H1 (cell line): ENCODE measurements at regions of chr6 and their contacts with region 1.

Region 1: DNA sequence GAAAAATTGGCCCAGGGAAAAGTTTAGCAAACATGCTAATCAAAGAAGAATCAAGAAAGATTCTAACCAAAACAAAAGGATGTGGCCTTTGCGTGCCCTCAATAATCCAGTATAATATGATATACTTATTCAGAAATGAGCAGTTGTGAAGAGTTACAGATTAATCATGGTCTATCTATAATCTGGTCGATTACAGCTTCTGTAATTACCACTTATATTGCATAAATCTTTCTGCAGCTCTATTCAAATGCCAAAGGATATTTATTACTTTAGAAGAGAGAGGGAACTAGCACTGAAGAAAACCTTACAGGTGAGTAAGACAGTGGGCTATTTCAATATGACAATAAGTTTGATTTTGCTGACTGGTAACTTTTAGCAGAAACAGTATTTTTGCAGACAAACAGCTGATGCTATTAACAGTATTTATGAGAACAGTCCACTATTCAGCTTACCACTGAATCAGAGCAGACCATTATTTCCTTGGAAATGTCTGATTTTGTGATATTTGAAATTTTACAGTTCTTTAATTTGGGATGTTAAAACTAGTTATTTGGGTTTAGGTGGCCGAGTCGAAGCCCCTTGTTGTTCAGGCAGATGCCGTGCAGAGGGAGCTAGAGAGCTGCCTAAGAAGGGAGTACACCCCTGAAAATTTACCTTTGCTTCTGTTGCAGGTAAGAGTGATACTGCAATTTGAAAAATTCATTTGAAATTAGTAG is 92.2 kb downstream of the CEP57L1 start:
- DNase-seq: peak; percentile 9 to 78
- H3K4me3 ChIP-seq: no peak overlapping the region
- H3K27ac ChIP-seq: no peak overlapping the region
- H3K4me1 ChIP-seq: peaks cover 0 to 7% (median 2%) of the 10 kb centered on the region in 4 experiments; a peak in 2 of 7 replicates
- H3K27me3 ChIP-seq: no peaks in the 10 kb centered on the region
- CTCF ChIP-seq: peak; percentile 68 to 88 (median 83)
- EP300 ChIP-seq: no peak
- POLR2A ChIP-seq: no peak
- RAD21 ChIP-seq: peak; percentile 95 to 96

Region 2: DNA sequence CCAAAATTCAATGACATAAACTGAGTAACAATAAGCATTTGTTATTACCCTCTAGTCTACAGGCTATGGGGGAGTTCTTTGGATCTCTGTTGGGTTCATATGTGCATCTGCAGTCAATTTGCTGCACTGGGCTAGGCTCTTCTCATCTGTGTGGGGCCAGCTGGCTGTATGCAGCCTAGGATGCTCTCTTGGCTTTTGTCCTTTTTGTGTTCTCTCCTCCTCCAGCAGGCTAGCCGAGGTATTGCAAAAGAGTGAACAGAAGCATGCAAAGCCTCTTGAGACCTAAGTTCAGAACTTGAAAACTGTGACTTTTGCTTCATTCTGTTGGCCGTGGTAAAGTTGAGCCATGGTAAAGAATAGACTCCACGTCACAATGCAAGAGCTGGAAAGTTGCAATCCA is 689.7 kb before region 1 on chr6:
- CTCF ChIA-PET with region 1: no interaction called
- POLR2A ChIA-PET with region 1: no interaction called
- DNase-seq: peak in 1 of 2 experiments; percentile 58
- H3K4me3 ChIP-seq: no peak overlapping the region
- H3K27ac ChIP-seq: no peak overlapping the region
- H3K4me1 ChIP-seq: no peaks in the 10 kb centered on the region
- H3K27me3 ChIP-seq: no peaks in the 10 kb centered on the region
- CTCF ChIP-seq: peak; percentile 8 to 66 (median 54)
- EP300 ChIP-seq: no peak
- POLR2A ChIP-seq: no peak
- RAD21 ChIP-seq: peak; percentile 69 to 76

Region 3: GRCh38 chr6:109165392-109165974 is 22.1 kb before region 1 on chr6:
- CTCF ChIA-PET with region 1: interaction called, 12 read pairs
- POLR2A ChIA-PET with region 1: no interaction called
- DNase-seq: no peak
- H3K4me3 ChIP-seq: no peak overlapping the region
- H3K27ac ChIP-seq: no peak overlapping the region
- H3K4me1 ChIP-seq: no peaks in the 10 kb centered on the region
- H3K27me3 ChIP-seq: no peaks in the 10 kb centered on the region
- CTCF ChIP-seq: no peak
- EP300 ChIP-seq: no peak
- POLR2A ChIP-seq: no peak
- RAD21 ChIP-seq: no peak

Region 4: GRCh38 chr6:109230453-109230852 is 42.9 kb after region 1 on chr6:
- CTCF ChIA-PET with region 1: interaction called, 10 read pairs
- POLR2A ChIA-PET with region 1: no interaction called
- DNase-seq: no peak
- H3K4me3 ChIP-seq: no peak overlapping the region
- H3K27ac ChIP-seq: no peak overlapping the region
- H3K4me1 ChIP-seq: no peaks in the 10 kb centered on the region
- H3K27me3 ChIP-seq: no peaks in the 10 kb centered on the region
- CTCF ChIP-seq: no peak
- EP300 ChIP-seq: no peak
- POLR2A ChIP-seq: no peak
- RAD21 ChIP-seq: no peak

Region 5: DNA sequence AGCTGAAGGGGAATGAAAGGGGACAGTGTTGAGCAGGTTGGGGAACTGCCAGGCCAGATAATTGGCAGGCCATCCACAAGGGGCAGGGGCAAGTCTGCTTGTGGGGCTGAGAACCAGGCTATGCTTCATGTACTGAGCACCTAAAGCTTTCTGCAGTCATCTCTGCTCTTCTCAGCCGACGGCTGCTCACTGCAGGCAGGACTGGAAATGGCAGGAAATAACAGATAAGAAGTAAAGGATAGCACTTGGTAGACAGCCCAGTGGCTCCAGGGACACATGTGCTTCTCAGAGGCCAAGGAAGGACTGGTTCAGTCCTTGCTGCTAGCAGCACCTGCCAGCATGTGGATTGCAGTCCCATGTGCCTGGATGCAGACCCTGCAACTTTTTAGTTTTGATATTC is 104.9 kb after region 1 on chr6:
- CTCF ChIA-PET with region 1: interaction called, 11 read pairs
- POLR2A ChIA-PET with region 1: no interaction called
- DNase-seq: no peak
- H3K4me3 ChIP-seq: no peak overlapping the region
- H3K27ac ChIP-seq: no peak overlapping the region
- H3K4me1 ChIP-seq: peaks cover 0 to 4% (median 0%) of the 10 kb centered on the region in 4 experiments; a peak in 1 of 7 replicates
- H3K27me3 ChIP-seq: 0 out of 7 replicates have a peak, but pooled peaks cover 0 to 3% (median 0%) of the 10 kb centered on the region in 4 experiments
- CTCF ChIP-seq: no peak
- EP300 ChIP-seq: no peak
- POLR2A ChIP-seq: no peak
- RAD21 ChIP-seq: no peak

Region 6: GRCh38 chr6:109397020-109397419 is 209.5 kb after region 1 on chr6:
- CTCF ChIA-PET with region 1: interaction called, 30 read pairs
- POLR2A ChIA-PET with region 1: no interaction called
- DNase-seq: no peak
- H3K4me3 ChIP-seq: no peak overlapping the region
- H3K27ac ChIP-seq: no peak overlapping the region
- H3K4me1 ChIP-seq: no peaks in the 10 kb centered on the region
- H3K27me3 ChIP-seq: no peaks in the 10 kb centered on the region
- CTCF ChIP-seq: peak in 2 of 3 experiments; percentile 29 to 30; a peak in 2 of 4 replicates
- EP300 ChIP-seq: no peak
- POLR2A ChIP-seq: no peak
- RAD21 ChIP-seq: peak; percentile 68 to 71

Region 7: GRCh38 chr6:109447878-109448555 is 260.5 kb after region 1 on chr6:
- CTCF ChIA-PET with region 1: interaction called, 23 read pairs
- POLR2A ChIA-PET with region 1: no interaction called
- DNase-seq: peak in 1 of 2 experiments; percentile 48
- H3K4me3 ChIP-seq: no peak overlapping the region
- H3K27ac ChIP-seq: no peak overlapping the region
- H3K4me1 ChIP-seq: no peaks in the 10 kb centered on the region; a peak in 1 of 7 replicates
- H3K27me3 ChIP-seq: no peaks in the 10 kb centered on the region
- CTCF ChIP-seq: peak in 2 of 3 experiments; percentile 5 to 19; a peak in 2 of 4 replicates
- EP300 ChIP-seq: no peak
- POLR2A ChIP-seq: 0 out of 3 replicates have a peak, but pooled peaks of 1 of the 2 experiments have one; percentile 7
- RAD21 ChIP-seq: peak in 1 of 2 experiments; percentile 18; a peak in 2 of 4 replicates

Region 8: GRCh38 chr6:110799189-110799588 is 1611.6 kb after region 1 on chr6:
- CTCF ChIA-PET with region 1: no interaction called
- POLR2A ChIA-PET with region 1: no interaction called
- DNase-seq: no peak
- H3K4me3 ChIP-seq: no peak overlapping the region
- H3K27ac ChIP-seq: no peak overlapping the region
- H3K4me1 ChIP-seq: no peaks in the 10 kb centered on the region
- H3K27me3 ChIP-seq: no peaks in the 10 kb centered on the region
- CTCF ChIP-seq: no peak
- EP300 ChIP-seq: no peak
- POLR2A ChIP-seq: no peak
- RAD21 ChIP-seq: no peak